ENCODE measurements at regions of chr11 and their contacts with region 1.

Region 1: GRCh38 chr11:46352063-46352841 is 5.0 kb downstream of the DGKZ start:
- DNase-seq: peak; percentile 69
- CTCF ChIP-seq: peak; percentile 87

Region 2: DNA sequence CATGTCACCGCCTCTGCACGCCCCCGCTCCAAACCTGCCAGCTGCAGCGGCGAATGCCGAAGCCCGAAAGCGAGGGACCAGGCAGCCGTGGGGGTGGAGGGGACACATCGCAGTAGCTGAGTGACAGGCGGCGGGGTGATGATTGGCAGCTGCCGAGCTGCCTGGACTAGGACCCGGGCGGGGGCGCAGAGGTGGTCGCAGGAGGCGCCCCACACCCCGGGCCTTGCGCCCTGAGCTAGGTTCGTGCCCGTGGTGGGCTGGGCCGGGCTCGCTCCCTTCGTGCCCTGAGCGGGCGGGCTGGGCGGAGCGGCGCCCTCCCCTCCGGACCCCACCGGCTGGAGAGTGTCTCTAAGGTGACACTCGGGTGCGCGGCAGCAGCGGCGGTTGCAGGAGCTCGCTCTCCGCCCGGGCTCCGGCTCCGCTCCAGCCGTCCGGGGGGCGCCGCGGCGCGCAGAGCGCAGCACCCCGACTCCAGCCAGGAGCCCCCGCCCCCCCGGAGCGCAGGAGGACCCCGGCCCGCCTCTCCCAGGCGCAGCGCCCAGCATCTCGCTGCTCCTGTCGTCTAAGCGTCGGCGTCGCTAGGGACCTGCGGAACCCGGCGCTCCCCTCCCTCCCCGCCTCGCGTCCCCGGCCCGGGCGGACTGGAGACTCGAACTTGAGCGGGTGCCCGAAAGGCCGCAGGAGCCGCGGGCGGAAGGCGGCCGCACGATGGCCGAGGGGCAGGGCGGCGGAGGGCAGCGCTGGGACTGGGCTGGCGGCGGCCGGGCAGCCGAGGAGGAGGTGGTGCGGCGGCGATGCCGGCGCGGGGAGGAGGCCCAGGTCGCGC is 19.5 kb before region 1 on chr11:
- CTCF ChIA-PET with region 1: interaction called, 15 read pairs
- POLR2A ChIA-PET with region 1: no interaction called
- DNase-seq: no peak
- CTCF ChIP-seq: no peak

Region 3: DNA sequence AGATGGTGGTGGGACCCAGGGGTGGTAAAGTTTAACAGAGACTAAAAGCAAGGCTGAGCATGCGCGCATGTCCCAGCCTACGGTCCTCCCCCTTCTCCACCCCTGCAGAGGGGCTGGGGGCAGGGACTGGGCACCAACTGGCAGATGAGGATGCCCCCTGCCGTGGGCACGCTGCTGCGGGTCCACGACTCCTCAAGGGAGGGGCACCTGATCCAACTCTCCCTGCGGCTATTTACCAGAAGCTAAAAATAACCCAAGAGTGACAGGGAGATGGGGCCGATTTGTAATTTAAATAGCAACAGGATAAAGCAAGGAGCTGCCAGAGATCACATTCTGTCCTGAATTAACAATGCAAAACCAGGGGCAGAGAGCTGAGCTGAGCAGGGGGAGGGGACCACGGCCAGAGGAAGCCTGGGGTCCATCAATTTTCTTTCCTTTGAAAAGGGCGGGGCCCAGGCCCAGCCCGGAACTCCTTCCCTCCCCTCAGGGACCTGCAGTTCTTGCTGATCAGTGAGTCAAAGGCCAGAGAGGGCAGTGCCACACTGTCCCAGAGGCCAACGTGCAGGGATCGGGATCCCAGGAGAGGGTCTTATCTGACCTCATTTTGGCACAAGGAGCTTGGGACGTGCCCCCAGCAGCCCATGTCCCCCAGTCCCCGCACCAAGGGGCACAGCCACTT is 13.1 kb before region 1 on chr11:
- CTCF ChIA-PET with region 1: interaction called, 452 read pairs
- POLR2A ChIA-PET with region 1: no interaction called
- DNase-seq: no peak
- CTCF ChIP-seq: no peak

Region 4: DNA sequence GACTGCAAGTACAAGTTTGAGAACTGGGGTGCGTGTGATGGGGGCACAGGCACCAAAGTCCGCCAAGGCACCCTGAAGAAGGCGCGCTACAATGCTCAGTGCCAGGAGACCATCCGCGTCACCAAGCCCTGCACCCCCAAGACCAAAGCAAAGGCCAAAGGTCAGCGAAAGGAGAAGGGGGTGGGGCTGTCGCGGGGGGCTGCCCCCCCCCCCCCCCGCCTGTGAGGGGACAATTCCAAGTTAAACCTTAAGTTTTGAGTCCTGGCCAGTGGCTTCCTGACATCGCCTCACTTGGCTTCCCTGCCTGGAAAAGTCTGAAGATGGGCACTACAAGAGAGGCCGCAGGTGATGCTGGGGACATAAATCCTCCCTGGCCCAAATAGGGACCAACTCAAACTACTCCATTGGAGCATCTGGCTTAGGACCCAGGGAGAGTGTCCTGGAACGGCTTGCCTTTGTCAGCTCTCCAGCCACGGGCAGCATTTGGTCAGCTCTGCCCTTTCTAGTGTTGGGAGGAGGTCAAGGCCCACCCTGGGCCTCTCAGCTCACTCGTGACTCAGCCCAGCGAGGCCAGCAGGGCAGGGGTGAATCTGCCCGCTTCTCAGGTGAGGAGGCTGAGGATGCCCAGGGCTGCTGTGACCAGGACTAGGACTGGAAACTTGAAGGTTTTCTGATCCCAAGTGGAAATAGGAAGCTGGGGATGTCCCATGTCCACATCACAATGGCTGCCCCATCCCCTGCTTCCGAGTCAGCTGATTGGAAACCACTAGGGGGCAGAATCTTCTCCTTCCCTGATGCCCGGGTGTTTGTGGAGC is 30.5 kb after region 1 on chr11:
- CTCF ChIA-PET with region 1: interaction called, 27 read pairs
- POLR2A ChIA-PET with region 1: no interaction called
- DNase-seq: no peak
- CTCF ChIP-seq: no peak